ENCODE measurements at regions of chr3 and their contacts with region 1.

Region 1: DNA sequence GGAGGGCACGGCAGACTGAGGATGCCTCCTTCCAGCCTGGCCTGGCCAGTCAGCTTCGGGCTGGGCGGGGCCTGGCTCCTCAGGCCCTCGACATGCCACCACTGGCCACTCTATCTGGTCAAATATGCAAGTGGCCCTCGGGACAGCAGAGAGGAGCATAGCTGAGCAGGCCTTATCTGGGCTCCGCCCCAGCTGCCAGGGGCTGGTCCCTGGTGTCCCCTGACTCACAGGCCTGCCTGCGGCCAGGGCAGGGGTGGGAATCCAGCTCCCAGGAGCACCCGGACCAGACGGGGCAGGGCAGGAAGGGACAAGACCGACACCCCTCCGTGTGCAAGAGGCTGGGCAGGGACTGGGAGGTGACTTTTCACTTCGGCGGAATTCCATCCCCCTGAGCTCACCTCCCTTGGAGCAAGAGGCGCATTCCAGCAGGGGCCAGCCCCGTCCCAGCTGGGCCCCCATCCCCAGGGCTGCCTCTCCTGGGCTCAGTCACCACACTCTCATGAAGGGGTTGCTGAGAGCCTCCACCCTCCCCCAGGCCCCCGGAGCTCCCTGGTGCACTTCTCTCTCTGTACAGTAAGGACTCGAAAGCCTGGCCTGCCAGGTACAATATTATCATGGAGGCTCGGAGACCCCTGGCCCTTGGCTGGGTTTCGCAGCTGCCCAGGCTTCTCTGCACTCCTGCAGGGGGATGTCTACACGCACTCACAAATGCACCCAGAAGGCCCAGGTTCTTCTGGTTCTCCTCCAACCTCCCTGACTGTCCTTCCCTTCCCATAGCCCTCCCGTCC is 29.5 kb downstream of the WNT7A start:
- DNase-seq: peak; percentile 98 to 99
- H3K4me3 ChIP-seq: peak overlapping the region; percentile 9; the same call in 1 of the 2 replicates
- H3K27ac ChIP-seq: peak overlapping the region; percentile 91
- H3K4me1 ChIP-seq: peaks cover 69% of the 10 kb centered on the region
- H3K27me3 ChIP-seq: no peaks in the 10 kb centered on the region
- CTCF ChIP-seq: no peak

Region 2: GRCh38 chr3:13537921-13538320 is 312.4 kb before region 1 on chr3:
- CTCF ChIA-PET with region 1: no interaction called
- POLR2A ChIA-PET with region 1: no interaction called
- intact Hi-C with region 1: loop called (anchors 10 kb)
- DNase-seq: peak; percentile 80 to 93
- H3K4me3 ChIP-seq: 0 out of 2 replicates have a peak overlapping the region, but pooled peaks have one; percentile 1
- H3K27ac ChIP-seq: peak overlapping the region; percentile 89
- H3K4me1 ChIP-seq: peaks cover 74% of the 10 kb centered on the region
- H3K27me3 ChIP-seq: no peaks in the 10 kb centered on the region
- CTCF ChIP-seq: no peak

Region 3: GRCh38 chr3:13548696-13549622 is 301.4 kb before region 1 on chr3 and contains the start of gene FBLN2:
- CTCF ChIA-PET with region 1: no interaction called
- POLR2A ChIA-PET with region 1: interaction called, 21 read pairs
- intact Hi-C with region 1: no loop called
- DNase-seq: no peak
- H3K4me3 ChIP-seq: no peak within 1 kb of the TSS
- H3K27ac ChIP-seq: no peak within 1 kb of the TSS
- H3K4me1 ChIP-seq: peaks cover 22% of the 10 kb centered on the region
- H3K27me3 ChIP-seq: no peaks in the 10 kb centered on the region
- CTCF ChIP-seq: no peak
- total RNA-seq, gene FBLN2: 0.57 and 1.8 TPM in 2 replicates